GM18951 (cell line): ENCODE measurements at regions of chr2 and their contacts with region 1.

Region 1: DNA sequence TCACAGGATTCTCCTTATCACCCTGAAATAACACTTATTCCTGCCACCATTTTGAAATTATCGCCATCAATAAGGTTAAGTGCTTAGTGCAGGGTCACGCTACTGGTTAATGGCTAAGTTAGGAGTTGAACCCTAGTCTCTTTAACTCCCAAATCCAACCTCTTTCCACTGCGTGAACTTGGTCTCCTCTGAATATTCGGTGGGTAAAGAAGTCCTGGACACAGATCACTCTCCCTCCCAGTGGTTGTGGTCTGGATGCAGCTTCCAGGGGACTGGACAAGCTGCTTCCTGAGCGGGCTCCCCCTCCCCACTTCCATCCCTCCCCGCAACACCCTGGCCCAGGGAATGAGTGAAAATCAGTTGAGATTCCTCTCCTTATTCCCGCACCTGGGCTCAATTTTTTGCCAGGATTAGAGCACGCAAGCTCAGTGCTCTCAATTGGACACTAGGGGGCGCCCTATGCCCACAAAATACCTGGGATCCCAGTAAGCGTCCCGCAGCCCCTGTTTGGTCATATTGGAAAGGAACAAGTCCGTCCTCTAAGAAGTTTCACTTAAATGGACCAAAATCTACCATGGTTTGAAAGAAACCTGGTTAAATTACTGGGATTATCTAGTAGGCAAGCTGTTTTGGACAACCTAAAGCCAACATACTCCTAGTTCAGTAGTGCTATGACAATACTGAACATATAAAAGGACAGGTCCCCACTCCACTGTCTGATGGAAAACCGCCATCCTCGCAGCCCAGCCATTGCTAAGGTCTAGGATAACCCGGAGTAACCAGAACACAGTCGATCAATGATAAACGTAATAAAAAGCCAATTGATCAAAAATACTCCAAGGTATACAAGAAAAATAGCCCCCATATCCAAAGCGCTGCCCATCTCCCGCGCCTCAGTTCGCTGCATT is 40.4 kb downstream of the DHRS9 start:
- POLR2A ChIP-seq: no peak

Region 2: GRCh38 chr2:167215595-167215994 is 1894.2 kb before region 1 on chr2:
- in situ Hi-C with region 1: no loop called
- POLR2A ChIP-seq: no peak

Region 3: GRCh38 chr2:168961450-168962229 is 148.1 kb before region 1 on chr2:
- in situ Hi-C with region 1: loop called (anchors 25 kb)
- POLR2A ChIP-seq: no peak

Region 4: DNA sequence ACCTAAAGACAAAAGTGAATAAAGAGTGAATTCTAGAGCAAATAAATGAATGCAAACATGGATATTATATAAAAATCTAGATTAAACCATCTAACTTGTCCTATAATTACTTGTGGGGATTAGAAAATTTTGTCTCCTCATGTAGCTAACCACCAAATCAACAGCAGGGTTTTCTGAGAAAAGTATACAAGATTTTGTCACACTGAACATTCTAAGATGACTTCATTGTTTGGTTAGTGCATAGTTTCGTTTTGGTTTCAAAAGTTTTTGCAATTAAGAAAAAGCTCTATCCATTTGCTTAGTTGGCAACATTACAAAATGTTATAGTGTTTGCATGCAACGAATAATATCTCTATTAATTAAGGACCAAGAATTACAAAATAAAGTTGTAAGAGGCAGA is 127.5 kb after region 1 on chr2:
- in situ Hi-C with region 1: no loop called
- POLR2A ChIP-seq: no peak